ENCODE measurements at regions of chr13 and their contacts with region 1.

Region 1: GRCh38 chr13:36297366-36298338 is at the start of gene CCDC169:
- DNase-seq: peak; percentile 83
- H3K4me3 ChIP-seq: peak within 1 kb of the TSS; percentile 46 to 68
- H3K27ac ChIP-seq: peak within 1 kb of the TSS; percentile 77 to 84
- H3K4me1 ChIP-seq: peaks cover 11% of the 10 kb centered on the region
- H3K27me3 ChIP-seq: no peaks in the 10 kb centered on the region
- CTCF ChIP-seq: peak in 1 of 4 experiments; percentile 8
- POLR2A ChIP-seq: peak; percentile 37
- total RNA-seq, gene CCDC169: 4.1 to 4.3 TPM

Region 2: GRCh38 chr13:36207672-36208071 is 90.0 kb before region 1 on chr13:
- intact Hi-C with region 1: no loop called
- DNase-seq: no peak
- H3K4me3 ChIP-seq: no peak overlapping the region
- H3K27ac ChIP-seq: no peak overlapping the region
- H3K4me1 ChIP-seq: no peaks in the 10 kb centered on the region
- H3K27me3 ChIP-seq: no peaks in the 10 kb centered on the region
- CTCF ChIP-seq: no peak
- POLR2A ChIP-seq: no peak

Region 3: DNA sequence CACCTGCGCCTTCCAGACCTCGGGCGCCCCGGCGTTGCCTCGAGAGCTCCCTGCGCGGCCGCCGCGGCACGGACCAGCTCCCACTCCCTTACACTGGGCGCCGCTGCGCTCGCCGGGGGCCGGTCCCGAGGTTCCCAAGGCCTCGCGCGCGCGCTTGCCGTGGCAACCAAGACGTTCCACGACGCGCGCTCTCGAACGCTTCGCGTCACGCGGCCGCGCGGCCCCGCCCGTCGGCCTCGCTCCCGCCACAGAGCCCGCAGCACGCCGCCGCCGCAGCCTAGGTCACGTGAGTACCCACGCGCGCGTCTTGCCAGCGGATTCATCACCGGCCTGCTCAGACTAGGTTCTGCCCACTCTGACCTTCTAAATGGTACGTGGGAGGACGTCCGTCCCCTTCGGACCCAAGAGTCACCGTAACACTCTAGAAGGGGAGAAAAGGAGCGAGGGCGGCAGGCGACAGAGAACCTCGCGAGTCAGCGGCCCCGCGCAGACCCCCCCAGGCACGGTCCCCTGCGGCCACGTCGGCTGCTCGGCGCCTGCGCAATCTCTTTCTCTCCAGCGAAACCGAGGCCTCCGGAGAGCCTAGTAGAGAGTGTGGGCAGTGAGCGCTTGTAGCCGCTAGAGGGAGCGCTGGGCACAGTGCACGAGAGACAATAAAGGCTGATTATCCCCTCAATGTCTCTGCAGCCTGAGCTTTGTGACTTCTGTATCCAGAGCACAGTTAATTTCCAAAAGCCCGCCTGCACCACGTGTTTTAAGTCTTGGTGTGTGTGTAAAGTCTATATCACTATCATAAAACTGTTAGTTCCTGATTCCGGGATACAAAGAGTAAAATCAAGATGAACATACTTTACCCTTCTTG is 48.8 kb after region 1 on chr13 and contains the start of gene SPART:
- intact Hi-C with region 1: loop called (anchors 5 kb)
- DNase-seq: peak; percentile 95
- H3K4me3 ChIP-seq: peak within 1 kb of the TSS; percentile 69 to 97
- H3K27ac ChIP-seq: peak within 1 kb of the TSS; percentile 98 to 99
- H3K4me1 ChIP-seq: no peaks in the 10 kb centered on the region
- H3K27me3 ChIP-seq: no peaks in the 10 kb centered on the region
- CTCF ChIP-seq: peak; percentile 90 to 97 (median 95)
- POLR2A ChIP-seq: peak; percentile 65
- total RNA-seq, gene SPART: 41.9 to 52.8 TPM